ENCODE measurements at regions of chr11 and their contacts with region 1.

Region 1: GRCh38 chr11:112280268-112281126 is 19.8 kb upstream of the PLET1 start:
- DNase-seq: peak; percentile 53
- ATAC-seq: peak; percentile 92 to 97
- H3K4me3 ChIP-seq: peak overlapping the region; percentile 50
- H3K27ac ChIP-seq: no peak overlapping the region
- H3K4me1 ChIP-seq: peaks cover 7% of the 10 kb centered on the region
- H3K27me3 ChIP-seq: no peaks in the 10 kb centered on the region
- CTCF ChIP-seq: peak; percentile 61

Region 2: DNA sequence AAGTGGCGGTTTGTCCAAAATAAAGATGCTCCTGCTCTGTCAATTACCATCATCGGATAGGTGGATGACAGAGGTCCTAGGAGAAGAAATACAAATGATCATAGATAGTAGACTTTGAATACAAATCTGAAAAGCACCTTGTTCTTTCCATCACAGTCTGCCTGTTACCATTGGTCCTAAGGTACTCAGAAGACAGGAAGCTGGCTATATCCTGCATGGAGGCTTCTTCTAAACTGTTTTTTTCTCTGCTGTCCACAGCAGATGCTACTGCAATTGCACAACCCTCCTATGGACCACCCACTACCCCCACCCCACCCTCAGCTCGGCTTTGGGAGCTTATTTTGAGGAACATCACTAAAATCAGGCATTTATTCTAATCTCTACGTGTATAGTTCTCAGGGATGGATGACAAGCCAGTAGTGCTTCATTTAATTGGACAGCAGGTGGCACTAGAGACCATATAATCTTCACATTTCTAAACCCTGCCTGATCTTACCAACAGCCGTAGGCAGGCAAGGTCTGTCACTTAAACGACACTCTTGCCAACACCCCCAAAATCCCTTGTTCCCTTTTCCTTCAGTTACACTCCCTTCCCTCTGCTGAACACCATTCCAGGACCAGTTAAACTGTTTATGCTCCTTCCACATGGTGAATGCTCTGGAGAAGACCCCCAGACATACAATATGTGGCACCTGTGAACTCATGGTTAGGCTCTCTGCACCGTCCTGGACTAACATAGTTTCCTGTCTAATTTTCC is 60.8 kb before region 1 on chr11:
- intact Hi-C with region 1: loop called (anchors 2 kb)
- DNase-seq: no peak
- ATAC-seq: peak; percentile 94
- H3K4me3 ChIP-seq: no peak overlapping the region
- H3K27ac ChIP-seq: no peak overlapping the region
- H3K4me1 ChIP-seq: peaks cover 10% of the 10 kb centered on the region
- H3K27me3 ChIP-seq: no peaks in the 10 kb centered on the region
- CTCF ChIP-seq: peak; percentile 79

Region 3: GRCh38 chr11:112453601-112454577 is 173.4 kb after region 1 on chr11:
- intact Hi-C with region 1: no loop called
- DNase-seq: peak; percentile 55
- ATAC-seq: peak; percentile 66 to 72
- H3K4me3 ChIP-seq: no peak overlapping the region
- H3K27ac ChIP-seq: no peak overlapping the region
- H3K4me1 ChIP-seq: no peaks in the 10 kb centered on the region
- H3K27me3 ChIP-seq: no peaks in the 10 kb centered on the region
- CTCF ChIP-seq: peak; percentile 44